ENCODE measurements at regions of chr10 and their contacts with region 1.

Region 1: DNA sequence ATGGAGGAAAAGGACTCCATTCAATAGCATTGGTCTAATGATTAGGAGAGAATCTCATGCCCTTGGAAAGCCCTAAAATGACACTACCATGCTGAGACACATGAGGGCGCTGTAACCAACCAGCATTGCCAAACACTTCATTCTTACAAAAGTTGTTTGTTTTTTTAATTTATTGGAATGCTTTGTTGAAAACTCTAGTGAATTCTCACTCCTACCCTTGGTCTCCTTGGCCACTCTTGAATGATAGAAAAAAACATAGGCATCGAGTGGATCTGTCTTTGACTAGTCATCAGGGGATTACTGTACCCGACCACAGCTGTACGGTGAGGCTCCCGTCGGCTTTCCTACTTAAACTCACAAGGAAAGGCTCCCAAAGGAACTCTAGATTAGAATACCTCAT is 29.3 kb upstream of the ADD3 start:
- DNase-seq: peak; percentile 30 to 68 (median 51)
- ATAC-seq: peak; percentile 87
- H3K4me3 ChIP-seq: no peak overlapping the region
- H3K4me3 Mint-ChIP-seq: no peak overlapping the region
- H3K27ac ChIP-seq: no peak overlapping the region
- H3K27ac Mint-ChIP-seq: peak overlapping the region in 3 of 9 donors; percentile 25 to 44 (median 41)
- H3K4me1 ChIP-seq: no peaks in the 10 kb centered on the region
- H3K4me1 Mint-ChIP-seq: peaks cover 5 to 38% (median 19%) of the 10 kb centered on the region in 7 donors
- H3K27me3 ChIP-seq: no peaks in the 10 kb centered on the region
- H3K27me3 Mint-ChIP-seq: peaks cover 0 to 12% (median 0%) of the 10 kb centered on the region in 5 donors

Region 2: GRCh38 chr10:110016039-110016438 is 37.6 kb after region 1 on chr10:
- CTCF ChIA-PET with region 1: interaction called, 5 read pairs
- POLR2A ChIA-PET with region 1: interaction called, 3 read pairs
- intact Hi-C with region 1: loop called (anchors 1 to 2 kb)
- DNase-seq: no peak
- ATAC-seq: no peak
- H3K4me3 ChIP-seq: no peak overlapping the region
- H3K4me3 Mint-ChIP-seq: peak overlapping the region; percentile 5 to 81 (median 64)
- H3K27ac ChIP-seq: peak overlapping the region; percentile 18
- H3K27ac Mint-ChIP-seq: peak overlapping the region in 8 of 9 donors; percentile 40 to 91 (median 80)
- H3K4me1 ChIP-seq: peaks cover 57 to 77% of the 10 kb centered on the region in 2 donors
- H3K4me1 Mint-ChIP-seq: peaks cover 64 to 97% (median 83%) of the 10 kb centered on the region in 7 donors
- H3K27me3 ChIP-seq: no peaks in the 10 kb centered on the region
- H3K27me3 Mint-ChIP-seq: no peaks in the 10 kb centered on the region

Region 3: GRCh38 chr10:110076559-110077318 is 98.3 kb after region 1 on chr10:
- CTCF ChIA-PET with region 1: no interaction called
- POLR2A ChIA-PET with region 1: no interaction called
- intact Hi-C with region 1: loop called in 1 of 2 experiments (anchors 1 kb)
- DNase-seq: peak in 7 of 9 donors; percentile 47 to 74 (median 60)
- ATAC-seq: peak; percentile 85
- H3K4me3 ChIP-seq: peak overlapping the region; percentile 21
- H3K4me3 Mint-ChIP-seq: peak overlapping the region; percentile 73 to 92 (median 86)
- H3K27ac ChIP-seq: peak overlapping the region; percentile 56
- H3K27ac Mint-ChIP-seq: peak overlapping the region; percentile 79 to 97 (median 94)
- H3K4me1 ChIP-seq: peaks cover 69 to 84% of the 10 kb centered on the region in 2 donors
- H3K4me1 Mint-ChIP-seq: peaks cover 64 to 97% (median 87%) of the 10 kb centered on the region in 7 donors
- H3K27me3 ChIP-seq: no peaks in the 10 kb centered on the region
- H3K27me3 Mint-ChIP-seq: no peaks in the 10 kb centered on the region

Region 4: GRCh38 chr10:110109511-110109910 is 131.0 kb after region 1 on chr10:
- CTCF ChIA-PET with region 1: interaction called, 9 read pairs
- POLR2A ChIA-PET with region 1: interaction called, 3 read pairs
- intact Hi-C with region 1: loop called (anchors 5 kb)
- DNase-seq: no peak
- ATAC-seq: no peak
- H3K4me3 ChIP-seq: no peak overlapping the region
- H3K4me3 Mint-ChIP-seq: no peak overlapping the region
- H3K27ac ChIP-seq: no peak overlapping the region
- H3K27ac Mint-ChIP-seq: peak overlapping the region in 7 of 9 donors; percentile 21 to 85 (median 69)
- H3K4me1 ChIP-seq: no peaks in the 10 kb centered on the region
- H3K4me1 Mint-ChIP-seq: peaks cover 18 to 56% (median 45%) of the 10 kb centered on the region in 7 donors
- H3K27me3 ChIP-seq: no peaks in the 10 kb centered on the region
- H3K27me3 Mint-ChIP-seq: no peaks in the 10 kb centered on the region

Region 5: DNA sequence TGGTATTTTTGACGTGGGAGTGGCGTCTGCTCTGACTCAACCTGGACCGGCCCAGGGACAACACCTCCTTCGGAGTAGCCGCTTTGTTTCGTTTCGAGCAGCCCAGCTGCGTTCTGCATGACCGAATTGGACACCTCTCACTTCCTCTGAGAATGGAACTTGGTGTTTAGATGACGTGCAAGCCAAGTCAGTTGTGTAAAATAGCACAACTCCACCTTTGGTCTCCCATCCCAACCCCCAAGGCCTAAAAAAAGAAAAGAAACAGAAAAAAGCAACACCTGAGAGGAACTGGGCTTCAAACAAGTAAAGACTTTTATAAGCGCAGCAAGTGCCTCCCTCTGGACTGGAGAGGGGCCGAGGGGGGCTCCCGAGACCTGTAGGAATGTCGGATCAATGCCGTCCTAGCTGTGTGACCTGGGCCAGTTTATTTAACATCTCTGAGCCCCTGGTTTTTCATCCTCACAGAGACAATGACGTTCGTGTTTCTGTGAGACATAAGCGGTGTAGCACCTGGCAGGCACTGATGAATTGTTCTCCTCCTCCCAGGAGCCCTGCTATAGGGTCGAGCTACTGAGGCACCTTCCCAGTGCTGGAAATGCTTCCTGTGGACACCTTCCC is 378.3 kb after region 1 on chr10:
- CTCF ChIA-PET with region 1: no interaction called
- POLR2A ChIA-PET with region 1: no interaction called
- intact Hi-C with region 1: no loop called
- DNase-seq: peak in 8 of 9 donors; percentile 45 to 75 (median 60)
- ATAC-seq: peak; percentile 72
- H3K4me3 ChIP-seq: peak overlapping the region; percentile 57
- H3K4me3 Mint-ChIP-seq: peak overlapping the region; percentile 73 to 95 (median 84)
- H3K27ac ChIP-seq: peak overlapping the region; percentile 26
- H3K27ac Mint-ChIP-seq: peak overlapping the region; percentile 85 to 98 (median 97)
- H3K4me1 ChIP-seq: peaks cover 43 to 47% of the 10 kb centered on the region in 2 donors
- H3K4me1 Mint-ChIP-seq: peaks cover 35 to 57% (median 50%) of the 10 kb centered on the region in 7 donors
- H3K27me3 ChIP-seq: no peaks in the 10 kb centered on the region
- H3K27me3 Mint-ChIP-seq: no peaks in the 10 kb centered on the region

Region 6: DNA sequence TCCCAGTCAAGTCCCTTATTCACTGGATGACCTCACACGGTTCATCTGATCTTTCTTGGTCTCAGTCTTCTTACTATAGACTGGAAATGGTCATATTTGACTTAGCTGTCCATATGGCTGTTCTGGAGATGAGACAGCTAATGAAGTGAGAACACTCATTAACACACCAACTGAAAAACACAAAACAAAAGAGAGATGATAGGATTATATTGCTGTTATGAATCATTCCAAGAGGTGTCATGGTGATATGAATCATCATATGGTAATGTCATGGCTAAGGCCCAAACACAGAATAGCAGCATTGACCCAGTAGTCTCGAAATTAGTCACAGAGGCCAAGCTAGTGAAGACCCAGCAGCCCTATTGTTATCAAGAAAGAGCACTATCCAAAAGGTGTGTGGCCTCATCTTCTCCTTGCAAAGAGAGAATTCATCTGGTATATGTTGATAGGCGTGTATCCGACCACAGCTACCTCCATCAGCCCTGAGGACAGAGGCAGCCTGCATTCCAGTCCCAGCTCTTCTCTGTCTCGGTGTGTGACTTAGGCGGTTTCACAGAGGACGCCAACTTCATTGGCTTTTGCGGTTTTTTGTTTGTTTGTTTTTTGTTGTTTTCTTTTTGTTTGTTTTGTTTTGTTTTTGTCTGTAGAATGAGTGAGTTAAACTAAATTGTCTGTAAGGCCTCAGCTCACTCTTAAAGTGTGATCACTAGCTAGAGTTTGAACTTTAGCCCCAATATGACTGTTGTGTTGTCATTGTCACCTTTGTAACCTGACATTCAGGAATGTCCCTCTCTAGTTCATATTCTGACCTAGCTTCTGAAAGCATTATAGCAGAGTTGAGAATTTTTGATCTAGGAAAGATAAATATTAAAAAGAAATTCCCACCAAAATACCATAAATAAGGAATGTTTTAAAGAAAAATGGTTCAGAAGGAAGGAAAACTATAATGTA is 795.9 kb after region 1 on chr10:
- CTCF ChIA-PET with region 1: no interaction called
- POLR2A ChIA-PET with region 1: no interaction called
- intact Hi-C with region 1: no loop called
- DNase-seq: peak in 1 of 9 donors; percentile 54
- ATAC-seq: peak; percentile 41
- H3K4me3 ChIP-seq: no peak overlapping the region
- H3K4me3 Mint-ChIP-seq: peak overlapping the region in 1 of 10 donors; percentile 42
- H3K27ac ChIP-seq: no peak overlapping the region
- H3K27ac Mint-ChIP-seq: peak overlapping the region in 2 of 9 donors; percentile 47 to 88
- H3K4me1 ChIP-seq: peaks cover 0 to 11% of the 10 kb centered on the region in 2 donors
- H3K4me1 Mint-ChIP-seq: peaks cover 2 to 39% (median 9%) of the 10 kb centered on the region in 7 donors
- H3K27me3 ChIP-seq: no peaks in the 10 kb centered on the region
- H3K27me3 Mint-ChIP-seq: peaks cover 0 to 3% (median 0%) of the 10 kb centered on the region in 5 donors

Region 7: DNA sequence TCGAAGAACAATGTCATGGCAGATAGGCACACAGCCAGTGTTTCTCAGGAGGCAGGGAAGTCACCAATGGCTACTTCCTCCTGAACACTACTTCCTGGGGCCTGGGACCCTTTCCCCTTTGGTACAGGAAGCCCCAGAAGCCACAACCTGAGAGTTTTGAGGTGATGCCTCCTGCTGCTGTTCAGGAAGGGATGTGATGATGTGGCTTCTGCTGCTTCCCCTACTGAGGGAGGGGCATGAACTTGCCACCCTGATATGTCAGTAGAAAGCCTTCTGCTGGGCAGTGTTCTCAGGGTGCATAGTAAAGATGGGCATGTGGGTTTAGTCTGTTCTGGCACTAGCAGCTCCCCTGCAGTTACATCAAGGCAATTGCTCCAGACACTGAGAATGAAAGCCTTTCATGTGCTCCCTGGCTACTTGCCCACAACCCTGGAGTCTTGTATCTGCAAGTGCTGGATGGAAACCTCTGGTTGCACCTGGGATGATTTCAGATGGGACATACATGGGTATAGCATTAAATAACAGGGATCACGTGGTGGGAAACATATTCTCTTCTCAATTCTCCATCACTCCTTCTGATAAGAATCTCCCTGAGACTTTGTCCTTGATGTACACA is 1167.7 kb after region 1 on chr10:
- CTCF ChIA-PET with region 1: no interaction called
- POLR2A ChIA-PET with region 1: no interaction called
- intact Hi-C with region 1: no loop called
- DNase-seq: peak in 3 of 9 donors; percentile 2 to 11 (median 3)
- ATAC-seq: no peak
- H3K4me3 ChIP-seq: no peak overlapping the region
- H3K4me3 Mint-ChIP-seq: peak overlapping the region in 4 of 10 donors; percentile 12 to 33 (median 18)
- H3K27ac ChIP-seq: no peak overlapping the region
- H3K27ac Mint-ChIP-seq: no peak overlapping the region
- H3K4me1 ChIP-seq: peaks cover 0 to 7% of the 10 kb centered on the region in 2 donors
- H3K4me1 Mint-ChIP-seq: peaks cover 4 to 18% (median 12%) of the 10 kb centered on the region in 7 donors
- H3K27me3 ChIP-seq: no peaks in the 10 kb centered on the region
- H3K27me3 Mint-ChIP-seq: peaks cover 3 to 25% (median 15%) of the 10 kb centered on the region in 5 donors

Measured in naive thymus-derived CD4-positive, alpha-beta T cell (primary cell).